Activated T-helper 1 cell treated with anti-CD3 and anti-CD28 coated beads, Interleukin-12 subunit alpha, Interleukin-12 subunit beta, Interleukin-2, Interleukin-4 antibody, amounts not matched to agents 30 ng/mL and 10 ng/mL and 1 ng/mL, durations not matched to agents 14 hours and 24 hours and 36 hours (primary cell): ENCODE measurements at regions of chr5 and their contacts with region 1.

Region 1: DNA sequence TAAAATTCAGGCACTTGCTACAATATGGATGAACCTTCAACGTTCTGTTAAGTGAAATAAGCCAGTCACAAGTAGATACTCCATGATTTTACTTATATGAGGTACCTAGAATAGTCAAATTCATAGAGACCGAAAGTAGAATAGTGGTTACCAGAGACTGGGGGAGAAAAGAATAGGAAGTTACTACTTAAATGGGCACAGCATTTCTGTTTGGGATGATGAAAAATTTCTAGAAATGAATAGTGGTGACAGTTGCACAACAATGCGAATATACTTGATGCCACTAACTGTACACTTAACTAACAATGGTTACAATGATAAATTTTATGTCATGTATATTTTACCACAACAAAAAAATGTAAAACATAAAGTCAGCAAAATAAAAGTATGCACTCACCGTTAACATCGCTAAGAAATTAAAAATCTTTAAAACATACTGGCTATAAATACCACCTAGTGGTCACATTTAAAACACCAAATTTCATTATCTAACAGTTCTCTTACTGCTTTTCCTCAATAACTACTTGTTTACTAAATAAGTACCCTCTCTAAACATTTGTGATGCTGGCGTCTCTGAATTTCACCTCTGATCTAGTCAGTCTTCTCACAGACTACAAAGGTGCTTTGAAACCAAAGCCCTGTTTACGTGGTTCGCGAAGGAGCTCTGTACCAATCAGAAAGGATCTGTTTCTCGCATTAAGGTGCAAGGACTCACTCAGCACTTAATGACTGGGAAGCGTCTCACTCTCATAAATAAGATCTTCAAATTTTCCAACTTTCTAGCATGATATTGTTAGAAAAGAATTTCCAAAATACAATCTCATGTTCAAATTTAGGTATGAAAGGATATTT is 22.7 kb downstream of the KIF3A start:
- DNase-seq: no peak
- H3K4me3 Mint-ChIP-seq: peak overlapping the region; percentile 43
- H3K27ac Mint-ChIP-seq: no peak overlapping the region
- H3K4me1 Mint-ChIP-seq: peaks cover 15% of the 10 kb centered on the region
- H3K27me3 Mint-ChIP-seq: no peaks in the 10 kb centered on the region

Region 2: GRCh38 chr5:132506094-132506692 is 208.5 kb before region 1 on chr5:
- intact Hi-C with region 1: loop called (anchors 5 kb)
- DNase-seq: no peak
- H3K4me3 Mint-ChIP-seq: no peak overlapping the region
- H3K27ac Mint-ChIP-seq: no peak overlapping the region
- H3K4me1 Mint-ChIP-seq: peaks cover 54% of the 10 kb centered on the region
- H3K27me3 Mint-ChIP-seq: peaks cover 4% of the 10 kb centered on the region

Region 3: GRCh38 chr5:132591145-132591544 is 123.5 kb before region 1 on chr5:
- intact Hi-C with region 1: loop called (anchors 1 kb)
- DNase-seq: no peak
- H3K4me3 Mint-ChIP-seq: no peak overlapping the region
- H3K27ac Mint-ChIP-seq: no peak overlapping the region
- H3K4me1 Mint-ChIP-seq: peaks cover 2% of the 10 kb centered on the region
- H3K27me3 Mint-ChIP-seq: no peaks in the 10 kb centered on the region

Region 4: GRCh38 chr5:132662925-132663770 is 51.5 kb before region 1 on chr5:
- intact Hi-C with region 1: loop called (anchors 2 kb)
- DNase-seq: peak; percentile 43
- H3K4me3 Mint-ChIP-seq: peak overlapping the region; percentile 60
- H3K27ac Mint-ChIP-seq: peak overlapping the region; percentile 94
- H3K4me1 Mint-ChIP-seq: peaks cover 84% of the 10 kb centered on the region
- H3K27me3 Mint-ChIP-seq: no peaks in the 10 kb centered on the region

Region 5: GRCh38 chr5:132753135-132753987 is 38.7 kb after region 1 on chr5:
- intact Hi-C with region 1: loop called (anchors 1 kb)
- DNase-seq: no peak
- H3K4me3 Mint-ChIP-seq: peak overlapping the region; percentile 35
- H3K27ac Mint-ChIP-seq: peak overlapping the region; percentile 90
- H3K4me1 Mint-ChIP-seq: peaks cover 72% of the 10 kb centered on the region
- H3K27me3 Mint-ChIP-seq: peaks cover 3% of the 10 kb centered on the region

Region 6: DNA sequence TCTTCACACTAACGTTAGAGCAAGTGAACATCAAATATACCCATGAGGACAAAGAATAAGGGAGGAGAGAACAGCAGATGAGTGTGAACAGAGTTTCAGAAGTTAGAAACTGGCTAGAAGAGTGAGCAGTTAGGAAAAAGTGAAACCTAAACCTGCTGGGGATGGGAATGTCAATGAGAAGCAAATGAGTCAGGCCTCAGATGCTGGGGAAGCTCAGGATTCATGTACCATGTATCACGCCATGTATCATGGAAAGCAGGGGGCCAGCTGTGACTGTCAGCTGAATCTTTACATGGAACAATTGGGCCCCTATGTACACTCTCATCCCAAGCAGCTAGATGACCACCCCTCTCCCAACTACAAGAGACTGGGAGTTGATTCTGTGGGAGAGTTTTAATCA is 135.4 kb after region 1 on chr5:
- intact Hi-C with region 1: no loop called
- DNase-seq: no peak
- H3K4me3 Mint-ChIP-seq: no peak overlapping the region
- H3K27ac Mint-ChIP-seq: no peak overlapping the region
- H3K4me1 Mint-ChIP-seq: no peaks in the 10 kb centered on the region
- H3K27me3 Mint-ChIP-seq: peaks cover 7% of the 10 kb centered on the region